ENCODE measurements at regions of chr1 and their contacts with region 1.

Region 1: DNA sequence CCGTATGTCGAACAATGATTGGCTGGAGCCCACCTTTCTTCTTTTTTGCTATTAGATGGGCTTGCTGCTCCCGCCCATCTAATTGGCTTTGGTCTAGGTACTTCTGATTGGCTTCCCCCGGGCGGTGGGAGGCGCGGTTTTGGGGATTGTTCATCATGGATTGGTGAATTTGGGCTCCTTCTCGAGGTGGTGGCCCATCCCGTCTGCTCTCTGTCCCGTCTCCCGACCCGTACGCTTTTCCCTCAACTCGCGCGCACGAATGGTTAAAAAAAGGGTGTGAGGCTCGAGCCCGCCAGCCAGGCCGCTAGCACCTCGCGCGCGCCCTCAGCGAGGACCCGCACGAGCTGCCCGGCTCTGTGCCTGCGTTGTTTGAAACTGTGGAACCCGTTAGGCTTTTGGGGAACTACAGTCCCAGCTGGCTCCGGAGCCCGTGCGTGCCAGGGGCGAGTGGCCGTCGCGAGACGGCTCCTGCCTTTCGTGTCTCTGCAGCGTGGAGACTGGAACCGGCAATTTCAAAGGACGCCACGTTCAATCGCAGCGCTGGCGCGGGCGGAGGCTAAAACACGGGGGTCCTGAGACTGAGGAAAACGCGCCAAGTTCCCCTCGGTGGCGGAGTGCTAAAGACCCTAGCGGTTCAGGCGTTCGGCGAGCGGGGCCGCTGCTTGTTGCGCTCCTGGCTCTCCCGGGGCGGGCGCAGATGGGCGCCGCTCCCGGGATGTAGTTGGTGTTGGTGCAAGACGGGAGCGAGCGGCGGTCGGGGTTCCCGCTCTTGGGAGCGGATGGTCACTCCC is at the start of gene USP1:
- DNase-seq: peak; percentile 99
- H3K4me3 Mint-ChIP-seq: peak within 1 kb of the TSS; percentile 97
- H3K27ac Mint-ChIP-seq: peak within 1 kb of the TSS; percentile 99
- H3K4me1 Mint-ChIP-seq: peaks cover 25% of the 10 kb centered on the region
- H3K27me3 Mint-ChIP-seq: no peaks in the 10 kb centered on the region
- total RNA-seq, gene USP1: 68.4 to 69.7 TPM

Region 2: DNA sequence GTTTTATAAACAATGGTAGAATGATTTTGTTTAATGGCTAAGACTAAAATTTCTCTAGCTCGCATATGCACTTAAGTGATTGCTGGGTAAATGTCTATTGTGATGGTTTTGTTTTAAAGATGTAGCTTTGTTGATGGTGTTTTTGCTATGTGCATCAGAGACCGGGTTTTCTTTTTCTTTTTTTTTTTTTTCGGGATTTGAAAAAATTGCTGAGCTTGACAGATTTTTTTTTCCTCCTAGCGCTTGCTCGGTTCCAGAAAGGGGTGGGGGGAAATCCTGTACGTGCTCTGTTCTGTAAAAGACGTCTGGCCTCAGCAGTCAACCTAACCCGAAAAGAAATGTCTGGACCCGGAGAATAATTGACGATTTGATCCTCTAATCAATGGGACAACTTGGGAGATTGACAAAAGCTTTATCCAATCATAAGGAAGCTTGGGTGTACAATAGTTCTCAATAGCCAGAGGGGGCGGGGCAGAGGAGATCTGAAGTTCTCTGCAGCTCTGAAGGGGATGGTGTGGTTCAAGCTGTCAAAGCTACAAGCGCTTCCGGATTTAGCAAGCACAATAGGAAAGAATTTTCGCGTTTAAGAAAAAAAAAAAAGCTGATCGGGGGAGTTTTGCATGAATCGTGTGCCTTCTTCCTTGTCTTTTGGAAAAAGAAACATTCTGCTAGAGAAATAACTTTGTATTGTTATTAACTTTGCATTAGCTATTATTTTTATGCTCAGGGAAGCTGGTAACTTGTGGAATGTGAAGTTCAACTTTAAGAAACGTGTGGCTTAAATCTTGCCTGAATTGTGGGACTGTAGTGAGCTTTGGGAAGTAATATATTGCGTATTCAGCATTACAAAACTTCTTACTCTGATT is 1358.8 kb before region 1 on chr1:
- CTCF ChIA-PET with region 1: no interaction called
- POLR2A ChIA-PET with region 1: no interaction called
- intact Hi-C with region 1: loop called (anchors 5 kb)
- DNase-seq: peak; percentile 93
- H3K4me3 Mint-ChIP-seq: peak overlapping the region; percentile 89
- H3K27ac Mint-ChIP-seq: peak overlapping the region; percentile 86
- H3K4me1 Mint-ChIP-seq: peaks cover 44% of the 10 kb centered on the region
- H3K27me3 Mint-ChIP-seq: peaks cover 5% of the 10 kb centered on the region

Region 3: DNA sequence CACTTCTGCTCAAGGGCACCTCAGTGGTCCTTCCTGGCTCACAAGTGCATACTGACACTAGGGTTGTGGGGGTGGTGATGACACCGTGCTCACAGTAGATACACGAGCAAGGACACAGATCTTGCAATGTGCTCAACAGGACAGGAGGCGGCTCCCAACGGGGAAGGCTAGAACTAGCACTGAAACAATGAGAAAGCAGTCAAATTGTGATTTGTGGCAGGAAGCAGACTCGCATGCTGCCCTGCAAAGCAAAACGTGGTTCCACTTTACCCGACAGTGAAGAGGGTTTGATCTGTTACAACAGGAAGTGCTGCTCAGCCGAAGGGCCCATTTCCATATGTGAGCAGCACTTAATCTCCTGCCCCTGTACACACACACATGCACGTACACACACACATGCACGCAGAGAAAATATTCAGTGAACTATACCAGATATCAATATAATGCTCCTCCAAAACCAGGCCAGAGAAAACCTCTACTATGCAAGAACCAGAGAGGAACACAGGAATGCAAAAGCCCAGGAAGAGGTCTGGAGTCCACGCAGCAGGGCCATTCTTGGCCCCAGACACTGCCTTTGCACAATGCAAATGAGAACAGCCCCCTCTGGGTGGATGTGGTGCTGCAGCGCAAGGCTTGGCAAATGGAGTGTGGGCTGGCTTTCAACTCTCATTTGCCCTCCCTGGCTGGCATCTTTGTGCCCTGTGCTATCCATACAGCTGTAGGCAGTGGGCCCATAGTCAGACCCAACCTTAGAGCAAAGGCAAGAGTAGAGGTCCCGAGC is 164.5 kb before region 1 on chr1:
- CTCF ChIA-PET with region 1: no interaction called
- POLR2A ChIA-PET with region 1: no interaction called
- intact Hi-C with region 1: loop called (anchors 1 kb)
- DNase-seq: peak; percentile 74
- H3K4me3 Mint-ChIP-seq: no peak overlapping the region
- H3K27ac Mint-ChIP-seq: peak overlapping the region; percentile 70
- H3K4me1 Mint-ChIP-seq: peaks cover 20% of the 10 kb centered on the region
- H3K27me3 Mint-ChIP-seq: no peaks in the 10 kb centered on the region

Region 4: DNA sequence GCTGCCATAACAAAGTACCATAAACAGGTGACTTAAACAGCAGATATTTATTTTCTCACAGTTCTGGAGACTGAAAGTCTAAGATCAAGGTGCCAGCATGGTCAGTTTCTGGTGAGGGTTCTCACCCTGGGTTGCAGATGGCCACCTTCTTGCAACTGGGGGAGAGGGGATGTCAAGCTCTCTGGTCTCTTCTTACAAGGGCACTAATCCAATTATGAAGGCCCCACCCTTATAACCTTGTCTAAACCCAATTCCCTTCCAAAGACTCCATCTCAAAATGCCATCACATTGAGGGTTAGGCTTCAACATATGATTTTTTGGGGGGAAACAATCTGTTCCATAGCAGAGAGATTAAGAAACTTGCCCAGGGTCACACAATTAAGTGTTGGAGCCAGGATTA is 135.8 kb after region 1 on chr1:
- CTCF ChIA-PET with region 1: no interaction called
- POLR2A ChIA-PET with region 1: no interaction called
- intact Hi-C with region 1: no loop called
- DNase-seq: no peak
- H3K4me3 Mint-ChIP-seq: no peak overlapping the region
- H3K27ac Mint-ChIP-seq: no peak overlapping the region
- H3K4me1 Mint-ChIP-seq: no peaks in the 10 kb centered on the region
- H3K27me3 Mint-ChIP-seq: no peaks in the 10 kb centered on the region

Region 5: DNA sequence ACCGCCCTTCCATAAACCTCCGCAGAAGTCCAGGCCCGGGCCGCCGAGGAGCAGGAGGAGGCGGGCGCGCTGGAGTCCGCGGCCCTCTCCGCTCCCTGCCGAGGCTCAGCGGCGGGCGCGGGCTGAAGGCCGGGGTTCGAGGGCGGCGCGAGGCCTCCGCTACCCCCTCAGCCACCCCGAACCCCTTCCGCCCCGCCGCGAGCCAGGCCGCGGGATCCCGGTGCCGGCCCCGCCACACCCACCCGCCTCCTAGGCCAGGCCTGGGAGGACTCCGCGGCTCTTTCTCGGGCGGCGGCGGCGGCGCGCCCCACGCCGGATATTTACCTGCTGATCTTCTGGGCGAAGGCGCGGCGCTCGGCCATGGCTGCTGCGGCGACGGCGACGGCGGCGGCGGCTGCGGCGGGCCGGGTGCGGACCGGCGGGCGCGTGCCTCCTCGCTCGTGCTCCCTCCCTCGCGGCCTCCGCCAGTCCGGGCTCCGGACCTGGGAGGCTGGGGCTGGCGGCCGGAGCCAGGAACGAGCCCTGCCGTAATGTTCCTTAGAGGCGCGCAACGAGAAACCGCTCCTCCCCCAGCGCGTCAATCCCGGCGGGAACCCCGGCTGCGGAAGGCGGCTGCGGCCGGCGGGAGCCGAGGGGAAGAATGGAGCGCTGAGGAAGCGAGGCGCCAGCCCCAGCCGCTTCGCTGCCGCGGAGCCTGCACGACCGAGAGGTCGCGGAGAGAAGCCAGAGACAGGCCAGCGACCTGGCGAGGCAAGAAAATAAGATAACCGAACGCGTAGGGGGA is 251.4 kb after region 1 on chr1 and contains the start of gene DOCK7:
- CTCF ChIA-PET with region 1: no interaction called
- POLR2A ChIA-PET with region 1: interaction called, 4 read pairs
- intact Hi-C with region 1: loop called (anchors 1 kb)
- DNase-seq: peak; percentile 61
- H3K4me3 Mint-ChIP-seq: peak within 1 kb of the TSS; percentile 85
- H3K27ac Mint-ChIP-seq: peak within 1 kb of the TSS; percentile 73
- H3K4me1 Mint-ChIP-seq: peaks cover 34% of the 10 kb centered on the region
- H3K27me3 Mint-ChIP-seq: no peaks in the 10 kb centered on the region
- total RNA-seq, gene DOCK7: 15.5 to 20.4 TPM

Region 6: DNA sequence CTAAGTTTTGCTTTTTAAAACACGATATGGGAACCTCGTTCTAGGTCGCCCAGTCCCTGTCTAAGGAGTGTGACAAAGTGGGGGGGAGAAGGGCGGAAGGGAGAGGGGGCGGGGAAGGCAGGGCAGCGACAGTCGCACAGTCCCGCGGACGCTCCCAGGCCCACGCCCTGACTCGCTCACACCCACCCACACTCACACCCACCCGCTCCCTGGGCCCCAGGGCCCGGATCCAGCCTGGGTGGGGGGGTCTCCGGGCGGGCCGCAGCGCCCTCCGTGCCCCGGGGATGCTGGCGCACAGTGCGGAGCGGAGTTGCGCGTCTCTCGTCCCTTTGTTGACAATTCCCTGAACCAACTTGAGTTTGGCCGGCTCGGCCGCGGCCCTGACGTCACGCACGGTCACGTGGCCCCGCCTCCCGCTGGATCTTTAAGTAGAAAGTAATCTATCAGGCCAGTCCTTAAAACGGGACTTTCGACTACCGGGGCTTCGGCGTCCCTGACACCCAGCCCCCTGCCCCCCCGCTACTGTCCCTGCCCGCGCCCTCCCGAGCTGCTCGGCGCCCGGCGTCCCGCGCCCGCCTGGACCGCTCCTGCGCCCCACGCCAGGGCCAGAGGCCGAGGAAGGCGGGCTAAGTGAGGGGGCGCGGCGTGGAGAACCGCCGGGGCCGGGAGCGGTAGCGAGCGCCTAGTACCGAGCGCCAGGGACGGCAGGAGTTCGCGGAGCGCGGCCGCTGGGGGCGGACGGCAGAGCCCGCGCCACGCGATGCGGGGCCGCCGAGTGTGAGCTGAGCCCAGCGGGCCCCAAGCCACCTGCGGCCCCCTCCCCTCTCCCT is 885.7 kb after region 1 on chr1 and contains the start of gene FOXD3:
- CTCF ChIA-PET with region 1: no interaction called
- POLR2A ChIA-PET with region 1: no interaction called
- intact Hi-C with region 1: loop called (anchors 5 kb)
- DNase-seq: peak; percentile 58
- H3K4me3 Mint-ChIP-seq: peak within 1 kb of the TSS; percentile 74
- H3K27ac Mint-ChIP-seq: peak within 1 kb of the TSS; percentile 53
- H3K4me1 Mint-ChIP-seq: peaks cover 39% of the 10 kb centered on the region
- H3K27me3 Mint-ChIP-seq: peaks cover 75% of the 10 kb centered on the region
- total RNA-seq, gene FOXD3: not detected

Region 7: DNA sequence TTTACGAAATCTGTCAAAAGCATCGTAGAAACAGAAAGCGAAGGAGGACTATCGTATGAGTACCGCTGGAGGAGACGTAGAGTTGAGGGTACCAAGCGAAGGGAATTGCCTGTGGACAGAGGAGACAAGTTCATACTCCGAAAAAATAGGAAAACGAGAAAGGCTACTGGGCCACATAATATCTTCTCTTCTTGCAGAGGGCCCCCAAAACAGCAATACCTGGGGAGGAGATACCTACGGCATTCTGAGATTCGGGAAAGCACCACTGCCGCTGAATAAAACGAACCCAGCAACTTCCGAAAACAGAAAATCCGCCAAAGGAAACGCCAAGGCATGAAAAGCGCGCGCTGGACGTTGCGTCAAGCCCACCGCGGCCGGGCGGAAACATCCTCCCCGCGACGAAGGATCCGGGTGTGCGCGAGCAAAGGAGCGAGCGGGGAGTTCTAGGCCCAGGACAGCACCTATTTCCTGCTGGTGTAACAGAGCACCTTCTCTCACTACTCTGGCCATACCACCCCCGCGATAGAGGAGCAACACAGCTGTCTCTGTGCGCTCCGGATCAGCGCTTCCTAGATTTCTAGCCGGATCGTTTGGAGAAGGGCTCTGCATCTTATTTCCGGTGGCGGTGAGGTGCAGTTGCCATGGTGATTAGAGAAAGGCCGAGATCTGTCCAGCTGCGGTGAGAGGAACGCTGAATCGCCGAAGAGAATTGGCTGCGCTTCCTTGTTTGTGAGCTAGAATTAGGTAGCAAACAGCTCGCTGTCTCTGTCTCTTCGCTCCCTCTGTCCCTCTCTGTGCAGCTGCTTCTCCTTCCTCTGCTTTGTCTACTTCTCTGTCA is 1086.4 kb after region 1 on chr1 and contains the starts of genes EFCAB7 and ITGB3BP:
- CTCF ChIA-PET with region 1: no interaction called
- POLR2A ChIA-PET with region 1: no interaction called
- intact Hi-C with region 1: loop called (anchors 1 kb)
- DNase-seq: peak; percentile 89
- H3K4me3 Mint-ChIP-seq: peak within 1 kb of the TSS; percentile 94
- H3K27ac Mint-ChIP-seq: peak within 1 kb of the TSS; percentile 94
- H3K4me1 Mint-ChIP-seq: peaks cover 27% of the 10 kb centered on the region
- H3K27me3 Mint-ChIP-seq: no peaks in the 10 kb centered on the region
- total RNA-seq, gene EFCAB7: 5.6 to 5.8 TPM
- total RNA-seq, gene ITGB3BP: 59.5 to 61.1 TPM